ENCODE measurements at regions of chr6 and their contacts with region 1.

Region 1: GRCh38 chr6:166382933-166383801 is at the start of gene MPC1:
- DNase-seq: peak; percentile 97
- ATAC-seq: peak; percentile 95
- H3K4me3 Mint-ChIP-seq: peak within 1 kb of the TSS; percentile 86
- H3K27ac Mint-ChIP-seq: peak within 1 kb of the TSS; percentile 75
- H3K4me1 Mint-ChIP-seq: peaks cover 4% of the 10 kb centered on the region
- H3K27me3 Mint-ChIP-seq: no peaks in the 10 kb centered on the region
- total RNA-seq, gene MPC1: 17.7 to 20.5 TPM

Region 2: DNA sequence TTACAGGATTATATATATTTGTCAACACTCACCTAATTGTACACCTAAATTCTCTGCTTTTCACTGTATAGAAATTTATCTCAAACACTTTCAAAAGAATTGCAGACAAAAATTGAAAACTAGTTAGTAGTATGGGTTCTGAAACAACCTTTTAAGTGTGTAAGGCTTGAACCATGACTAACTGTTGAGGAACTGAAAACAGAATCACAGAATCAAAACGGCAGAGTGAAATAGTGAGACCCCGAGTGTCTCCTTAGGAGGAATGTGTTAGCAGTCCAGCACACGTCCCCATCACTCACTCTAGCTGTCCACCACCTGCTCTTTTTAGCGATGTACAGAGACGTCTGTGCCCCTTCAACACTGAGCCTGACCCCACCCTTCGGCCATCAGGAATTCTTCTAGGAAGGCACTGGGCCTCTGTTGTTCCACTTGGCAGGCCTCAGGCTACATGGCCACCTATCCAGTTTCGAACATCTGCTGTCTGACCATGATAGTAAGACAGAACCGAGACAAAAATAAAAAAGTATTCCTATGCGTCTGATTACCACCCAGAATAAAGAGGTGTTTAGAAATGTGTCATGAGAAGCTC is 1301.1 kb before region 1 on chr6:
- CTCF ChIA-PET with region 1: no interaction called
- POLR2A ChIA-PET with region 1: no interaction called
- intact Hi-C with region 1: no loop called
- DNase-seq: no peak
- ATAC-seq: no peak
- H3K4me3 Mint-ChIP-seq: no peak overlapping the region
- H3K27ac Mint-ChIP-seq: no peak overlapping the region
- H3K4me1 Mint-ChIP-seq: no peaks in the 10 kb centered on the region
- H3K27me3 Mint-ChIP-seq: no peaks in the 10 kb centered on the region

Region 3: GRCh38 chr6:166010136-166010535 is 373.0 kb before region 1 on chr6:
- CTCF ChIA-PET with region 1: no interaction called
- POLR2A ChIA-PET with region 1: no interaction called
- intact Hi-C with region 1: no loop called
- DNase-seq: no peak
- ATAC-seq: no peak
- H3K4me3 Mint-ChIP-seq: no peak overlapping the region
- H3K27ac Mint-ChIP-seq: no peak overlapping the region
- H3K4me1 Mint-ChIP-seq: no peaks in the 10 kb centered on the region
- H3K27me3 Mint-ChIP-seq: peaks cover 46% of the 10 kb centered on the region

Region 4: DNA sequence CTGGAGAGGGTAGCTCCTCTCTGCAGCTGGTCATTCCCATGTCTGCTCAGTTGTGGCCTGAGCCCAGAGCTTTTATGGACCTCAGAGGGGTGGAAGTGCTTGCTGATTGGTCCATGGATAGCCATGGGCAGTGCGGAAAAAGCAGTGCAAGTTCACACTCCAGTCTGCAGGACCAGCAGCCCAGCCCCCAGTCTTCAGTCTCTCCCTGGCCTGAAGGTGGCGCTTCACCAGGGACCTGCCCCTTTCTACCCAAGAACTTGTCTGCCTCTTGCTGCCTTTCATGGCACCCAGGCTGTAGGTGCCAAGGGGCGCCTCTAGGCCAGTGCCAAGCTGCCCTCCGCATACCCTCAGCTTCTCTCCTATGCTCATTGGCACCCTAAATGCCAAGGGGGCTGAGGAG is 306.5 kb before region 1 on chr6:
- CTCF ChIA-PET with region 1: no interaction called
- POLR2A ChIA-PET with region 1: no interaction called
- intact Hi-C with region 1: no loop called
- DNase-seq: peak; percentile 10
- ATAC-seq: no peak
- H3K4me3 Mint-ChIP-seq: no peak overlapping the region
- H3K27ac Mint-ChIP-seq: no peak overlapping the region
- H3K4me1 Mint-ChIP-seq: no peaks in the 10 kb centered on the region
- H3K27me3 Mint-ChIP-seq: no peaks in the 10 kb centered on the region

Region 5: DNA sequence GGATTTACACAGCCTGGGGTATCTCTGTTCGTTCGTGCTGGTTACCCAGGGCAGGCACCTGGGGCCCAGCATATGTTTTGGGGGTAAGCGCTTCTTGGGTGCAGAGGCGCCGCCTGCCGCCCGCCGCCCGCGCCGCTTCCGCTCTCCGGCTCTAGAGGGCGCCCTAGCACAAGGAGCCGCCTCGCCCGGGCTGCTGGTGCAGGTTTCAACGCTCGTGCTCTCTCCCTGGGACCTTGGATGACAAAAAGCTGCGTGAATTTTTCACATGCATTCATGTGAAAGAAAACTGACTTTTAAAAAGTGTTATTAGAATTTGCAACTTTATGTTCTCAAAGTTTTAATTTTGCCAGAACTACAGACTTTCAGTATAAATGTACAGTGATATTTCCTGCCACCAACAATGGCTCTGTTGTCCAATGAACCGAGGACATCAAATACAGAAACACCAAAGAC is 107.4 kb before region 1 on chr6:
- CTCF ChIA-PET with region 1: interaction called, 6 read pairs
- POLR2A ChIA-PET with region 1: no interaction called
- intact Hi-C with region 1: loop called (anchors 1 to 5 kb)
- DNase-seq: peak; percentile 87
- ATAC-seq: peak; percentile 91
- H3K4me3 Mint-ChIP-seq: no peak overlapping the region
- H3K27ac Mint-ChIP-seq: no peak overlapping the region
- H3K4me1 Mint-ChIP-seq: peaks cover 7% of the 10 kb centered on the region
- H3K27me3 Mint-ChIP-seq: peaks cover 4% of the 10 kb centered on the region

Region 6: GRCh38 chr6:166313255-166314070 is 69.7 kb before region 1 on chr6:
- CTCF ChIA-PET with region 1: interaction called, 27 read pairs
- POLR2A ChIA-PET with region 1: no interaction called
- intact Hi-C with region 1: loop called (anchors 1 kb)
- DNase-seq: peak; percentile 83
- ATAC-seq: peak; percentile 97
- H3K4me3 Mint-ChIP-seq: no peak overlapping the region
- H3K27ac Mint-ChIP-seq: no peak overlapping the region
- H3K4me1 Mint-ChIP-seq: peaks cover 3% of the 10 kb centered on the region
- H3K27me3 Mint-ChIP-seq: peaks cover 16% of the 10 kb centered on the region

Region 7: DNA sequence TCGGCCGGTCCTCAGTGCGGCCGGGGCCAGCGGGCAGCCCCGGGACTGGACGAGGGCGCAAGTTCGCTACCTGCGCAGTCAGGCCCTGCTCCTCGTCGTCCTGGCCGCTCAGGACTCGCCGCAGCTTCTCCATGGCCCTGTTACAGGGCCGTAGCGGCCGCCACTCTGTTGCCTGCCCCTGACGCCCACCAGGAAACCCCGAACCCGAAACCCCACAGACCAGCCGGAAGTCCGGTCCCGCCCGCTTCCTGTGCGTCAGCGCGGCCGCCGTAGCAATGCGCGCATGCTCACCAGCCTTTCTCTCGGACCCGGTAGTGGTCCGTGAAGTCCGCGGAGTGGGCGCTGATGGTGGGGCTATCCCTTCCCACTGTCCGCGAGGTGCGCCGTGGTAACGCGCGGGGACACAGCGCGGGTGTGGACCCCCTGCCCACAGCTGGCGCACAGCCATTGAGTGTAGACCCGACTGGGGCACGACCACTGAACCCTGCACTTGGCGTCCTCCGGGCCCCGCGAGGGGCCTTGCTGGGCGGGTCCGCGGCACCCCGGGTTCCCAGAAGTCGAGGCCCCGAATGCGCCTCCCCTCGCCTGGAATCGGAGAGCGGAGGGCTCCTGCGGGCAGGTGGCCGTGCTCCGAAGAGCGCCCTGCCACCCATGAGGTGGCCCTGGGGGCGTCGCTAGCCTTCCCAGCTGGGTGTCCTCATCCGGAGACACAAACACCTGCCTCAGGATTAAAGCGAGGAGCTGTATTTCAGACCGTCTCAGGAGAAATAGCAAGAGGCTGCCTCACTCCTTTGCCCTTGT is 40.6 kb before region 1 on chr6 and contains the start of gene SFT2D1:
- CTCF ChIA-PET with region 1: interaction called, 8 read pairs
- POLR2A ChIA-PET with region 1: no interaction called
- intact Hi-C with region 1: loop called (anchors 1 kb)
- DNase-seq: peak; percentile 80
- ATAC-seq: peak; percentile 75
- H3K4me3 Mint-ChIP-seq: peak within 1 kb of the TSS; percentile 81
- H3K27ac Mint-ChIP-seq: peak within 1 kb of the TSS; percentile 80
- H3K4me1 Mint-ChIP-seq: peaks cover 14% of the 10 kb centered on the region
- H3K27me3 Mint-ChIP-seq: no peaks in the 10 kb centered on the region
- total RNA-seq, gene SFT2D1: 39.8 to 54.2 TPM

Region 8: GRCh38 chr6:166419286-166419685 is 36.1 kb after region 1 on chr6:
- CTCF ChIA-PET with region 1: interaction called, 3 read pairs
- POLR2A ChIA-PET with region 1: no interaction called
- intact Hi-C with region 1: loop called in 1 of 2 experiments (anchors 1 kb)
- DNase-seq: peak; percentile 75
- ATAC-seq: peak; percentile 50
- H3K4me3 Mint-ChIP-seq: no peak overlapping the region
- H3K27ac Mint-ChIP-seq: peak overlapping the region; percentile 34
- H3K4me1 Mint-ChIP-seq: peaks cover 62% of the 10 kb centered on the region
- H3K27me3 Mint-ChIP-seq: no peaks in the 10 kb centered on the region

Region 9: GRCh38 chr6:166456395-166457156 is 73.4 kb after region 1 on chr6:
- CTCF ChIA-PET with region 1: no interaction called
- POLR2A ChIA-PET with region 1: no interaction called
- intact Hi-C with region 1: no loop called
- DNase-seq: no peak
- ATAC-seq: no peak
- H3K4me3 Mint-ChIP-seq: no peak overlapping the region
- H3K27ac Mint-ChIP-seq: no peak overlapping the region
- H3K4me1 Mint-ChIP-seq: no peaks in the 10 kb centered on the region
- H3K27me3 Mint-ChIP-seq: no peaks in the 10 kb centered on the region

Region 10: GRCh38 chr6:166627033-166627874 is 244.1 kb after region 1 on chr6 and contains the start of gene RPS6KA2:
- CTCF ChIA-PET with region 1: interaction called, 4 read pairs
- POLR2A ChIA-PET with region 1: no interaction called
- intact Hi-C with region 1: loop called (anchors 1 kb)
- DNase-seq: peak; percentile 100
- ATAC-seq: peak; percentile 96
- H3K4me3 Mint-ChIP-seq: peak within 1 kb of the TSS; percentile 71
- H3K27ac Mint-ChIP-seq: peak within 1 kb of the TSS; percentile 77
- H3K4me1 Mint-ChIP-seq: peaks cover 14% of the 10 kb centered on the region
- H3K27me3 Mint-ChIP-seq: peaks cover 22% of the 10 kb centered on the region
- total RNA-seq, gene RPS6KA2: 9.3 to 10.9 TPM

Region 11: GRCh38 chr6:166999145-166999883 is 616.1 kb after region 1 on chr6 and contains the start of gene CEP43:
- CTCF ChIA-PET with region 1: no interaction called
- POLR2A ChIA-PET with region 1: no interaction called
- intact Hi-C with region 1: loop called in 1 of 2 experiments (anchors 2 kb)
- DNase-seq: peak; percentile 91
- ATAC-seq: peak; percentile 96
- H3K4me3 Mint-ChIP-seq: peak within 1 kb of the TSS; percentile 85
- H3K27ac Mint-ChIP-seq: peak within 1 kb of the TSS; percentile 78
- H3K4me1 Mint-ChIP-seq: peaks cover 26% of the 10 kb centered on the region
- H3K27me3 Mint-ChIP-seq: no peaks in the 10 kb centered on the region
- total RNA-seq, gene CEP43: 19.9 to 20.0 TPM

Measured in activated CD4-positive, alpha-beta T cell treated with anti-CD3 and anti-CD28 coated beads for 36 hours (primary cell).